ENCODE measurements at regions of chr5 and their contacts with region 1.

Region 1: DNA sequence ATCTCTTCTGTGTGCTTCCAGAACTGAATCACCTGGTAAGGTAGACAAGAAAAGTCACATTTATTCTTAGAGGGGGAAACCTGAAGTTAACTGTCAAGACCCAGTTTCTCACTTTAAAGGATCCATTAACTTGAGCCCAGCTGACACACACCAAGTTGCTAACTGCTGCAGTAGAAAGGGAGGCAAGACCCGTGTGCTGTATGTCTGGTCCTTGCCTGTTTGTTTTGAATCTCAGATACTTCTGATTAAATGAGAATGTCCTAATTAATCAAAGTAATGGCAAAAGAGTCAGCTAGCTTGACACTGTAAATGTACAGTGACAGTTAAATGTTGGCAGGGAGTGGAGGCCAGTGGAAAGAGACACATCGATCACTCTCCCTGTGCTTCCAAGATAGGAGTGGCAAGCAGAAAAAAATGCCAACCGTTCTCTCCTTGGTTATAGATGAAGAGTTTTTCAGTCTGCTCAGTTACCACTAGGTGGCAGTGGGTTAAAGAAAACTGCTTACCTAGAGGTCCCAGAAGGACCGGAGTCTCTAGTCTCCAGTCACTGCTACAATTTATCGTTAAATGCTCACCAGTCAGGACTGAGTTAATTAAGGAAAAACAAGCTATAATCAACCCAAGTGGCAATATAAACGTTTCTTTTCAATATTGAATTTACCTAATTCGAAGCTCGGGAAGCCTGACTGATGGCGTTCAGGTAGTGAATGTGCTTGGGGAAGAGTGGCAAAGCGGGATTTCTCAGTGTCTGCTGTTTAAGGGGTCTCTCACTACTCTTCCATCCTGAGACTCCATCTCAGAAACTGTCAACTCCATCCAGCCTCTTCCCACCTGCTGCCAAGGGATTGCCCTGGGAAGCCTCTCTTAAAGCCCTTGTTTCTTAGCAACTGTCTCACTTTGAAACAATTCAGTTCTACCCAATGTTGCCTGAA is 18.4 kb downstream of the LSM11 start:
- DNase-seq: peak; percentile 75
- H3K4me3 ChIP-seq: peak overlapping the region in 1 of 2 experiments; percentile 25; a peak in 1 of 4 replicates
- H3K27ac ChIP-seq: no peak overlapping the region
- H3K4me1 ChIP-seq: no peaks in the 10 kb centered on the region; a peak in 1 of 4 replicates
- H3K27me3 ChIP-seq: no peaks in the 10 kb centered on the region
- CTCF ChIP-seq: peak; percentile 80
- EP300 ChIP-seq: no peak
- RAD21 ChIP-seq: peak; percentile 84

Region 2: GRCh38 chr5:157718519-157718918 is 43.4 kb before region 1 on chr5:
- CTCF ChIA-PET with region 1: no interaction called
- POLR2A ChIA-PET with region 1: no interaction called
- DNase-seq: peak; percentile 61
- H3K4me3 ChIP-seq: no peak overlapping the region; a peak in 1 of 4 replicates
- H3K27ac ChIP-seq: peak overlapping the region in 1 of 2 experiments; percentile 51; a peak in 1 of 4 replicates
- H3K4me1 ChIP-seq: no peaks in the 10 kb centered on the region; a peak in 1 of 4 replicates
- H3K27me3 ChIP-seq: no peaks in the 10 kb centered on the region
- CTCF ChIP-seq: peak; percentile 72
- EP300 ChIP-seq: no peak
- RAD21 ChIP-seq: peak; percentile 87

Region 3: GRCh38 chr5:157743163-157744050 is 18.5 kb before region 1 on chr5 and contains the start of gene LSM11:
- CTCF ChIA-PET with region 1: interaction called, 41 read pairs
- POLR2A ChIA-PET with region 1: no interaction called
- DNase-seq: peak; percentile 98
- H3K4me3 ChIP-seq: peak within 1 kb of the TSS; percentile 76 to 83
- H3K27ac ChIP-seq: peak within 1 kb of the TSS in 1 of 2 experiments; percentile 56; a peak in 1 of 4 replicates
- H3K4me1 ChIP-seq: peaks cover 0 to 18% of the 10 kb centered on the region in 2 experiments; a peak in 2 of 4 replicates
- H3K27me3 ChIP-seq: no peaks in the 10 kb centered on the region
- CTCF ChIP-seq: peak; percentile 93
- EP300 ChIP-seq: no peak; a peak in 1 of 4 replicates
- RAD21 ChIP-seq: peak; percentile 79
- polyA plus RNA-seq, gene LSM11: 0.95 and 1.3 TPM in 2 replicates

Region 4: GRCh38 chr5:157772127-157772526 is 10.2 kb after region 1 on chr5:
- CTCF ChIA-PET with region 1: interaction called, 28 read pairs
- POLR2A ChIA-PET with region 1: no interaction called
- DNase-seq: no peak
- H3K4me3 ChIP-seq: no peak overlapping the region
- H3K27ac ChIP-seq: no peak overlapping the region
- H3K4me1 ChIP-seq: no peaks in the 10 kb centered on the region
- H3K27me3 ChIP-seq: no peaks in the 10 kb centered on the region
- CTCF ChIP-seq: no peak
- EP300 ChIP-seq: no peak
- RAD21 ChIP-seq: no peak

Region 5: GRCh38 chr5:157793301-157793700 is 31.3 kb after region 1 on chr5:
- CTCF ChIA-PET with region 1: interaction called, 11 read pairs
- POLR2A ChIA-PET with region 1: no interaction called
- DNase-seq: no peak
- H3K4me3 ChIP-seq: no peak overlapping the region
- H3K27ac ChIP-seq: no peak overlapping the region
- H3K4me1 ChIP-seq: no peaks in the 10 kb centered on the region
- H3K27me3 ChIP-seq: no peaks in the 10 kb centered on the region
- CTCF ChIP-seq: no peak
- EP300 ChIP-seq: no peak
- RAD21 ChIP-seq: no peak

Region 6: DNA sequence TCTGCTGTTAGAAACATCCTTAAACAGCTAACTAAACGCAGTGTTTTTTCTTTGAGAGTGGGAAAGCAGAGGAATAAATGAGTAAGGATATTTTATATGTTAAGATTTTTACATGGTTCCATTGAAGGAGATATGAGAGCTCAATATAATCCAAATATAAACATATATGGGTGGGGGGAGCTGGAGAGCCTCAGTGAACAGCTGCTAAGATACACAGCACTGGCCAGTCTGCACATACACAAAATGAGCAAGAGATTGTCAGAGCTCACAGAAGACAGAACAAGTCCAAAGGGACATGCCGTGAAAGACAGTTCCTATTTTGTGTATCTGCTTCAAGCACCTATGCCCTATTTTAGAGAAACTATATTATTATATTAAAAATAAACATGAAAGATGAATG is 50.1 kb after region 1 on chr5:
- CTCF ChIA-PET with region 1: interaction called, 11 read pairs
- POLR2A ChIA-PET with region 1: no interaction called
- DNase-seq: no peak
- H3K4me3 ChIP-seq: no peak overlapping the region
- H3K27ac ChIP-seq: no peak overlapping the region
- H3K4me1 ChIP-seq: no peaks in the 10 kb centered on the region; a peak in 2 of 4 replicates
- H3K27me3 ChIP-seq: no peaks in the 10 kb centered on the region
- CTCF ChIP-seq: no peak
- EP300 ChIP-seq: no peak
- RAD21 ChIP-seq: no peak

Region 7: GRCh38 chr5:157948738-157949410 is 186.9 kb after region 1 on chr5:
- CTCF ChIA-PET with region 1: interaction called, 26 read pairs
- POLR2A ChIA-PET with region 1: no interaction called
- DNase-seq: peak; percentile 77
- H3K4me3 ChIP-seq: peak overlapping the region in 1 of 2 experiments; percentile 1; a peak in 1 of 4 replicates
- H3K27ac ChIP-seq: no peak overlapping the region
- H3K4me1 ChIP-seq: no peaks in the 10 kb centered on the region; a peak in 1 of 4 replicates
- H3K27me3 ChIP-seq: no peaks in the 10 kb centered on the region
- CTCF ChIP-seq: peak; percentile 91
- EP300 ChIP-seq: no peak
- RAD21 ChIP-seq: peak; percentile 83

Region 8: DNA sequence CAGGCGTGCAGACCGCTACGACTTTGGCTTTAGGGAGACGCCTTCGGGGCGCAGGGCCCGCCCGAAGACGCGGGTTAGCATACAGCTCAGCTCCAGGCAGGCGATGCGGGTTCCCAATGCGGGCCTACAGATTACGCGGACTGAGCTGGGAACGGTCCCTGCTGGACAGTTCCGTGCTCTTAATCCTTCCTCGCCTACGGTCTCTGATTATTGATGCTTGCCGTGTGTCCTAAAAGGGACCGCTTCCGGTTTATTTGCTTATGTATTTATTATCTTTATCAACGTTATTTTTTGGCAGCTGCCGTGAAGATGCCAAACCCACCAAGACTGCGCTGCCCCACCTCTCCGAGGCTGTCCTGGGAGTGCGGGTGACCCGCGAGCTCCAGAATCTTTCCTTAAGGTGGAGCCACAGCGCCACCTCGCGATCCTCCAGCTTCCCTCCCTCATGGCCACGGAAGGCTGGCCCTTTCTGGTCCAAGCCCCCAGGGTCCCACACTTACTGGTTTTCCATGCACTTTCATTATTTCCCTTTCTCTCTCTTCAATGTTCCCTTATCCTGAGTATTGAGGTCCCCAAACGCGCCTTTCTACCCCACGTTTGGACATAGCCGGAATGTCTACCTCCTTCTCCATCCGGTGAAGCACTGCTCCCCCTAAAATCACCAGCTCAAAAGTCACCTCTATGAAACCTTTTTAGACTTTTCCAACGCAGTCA is 1344.8 kb after region 1 on chr5:
- CTCF ChIA-PET with region 1: interaction called, 19 read pairs
- POLR2A ChIA-PET with region 1: no interaction called
- DNase-seq: peak; percentile 91
- H3K4me3 ChIP-seq: peak overlapping the region; percentile 28 to 63; a peak in 2 of 4 replicates
- H3K27ac ChIP-seq: no peak overlapping the region
- H3K4me1 ChIP-seq: no peaks in the 10 kb centered on the region; a peak in 1 of 4 replicates
- H3K27me3 ChIP-seq: peaks cover 10% of the 10 kb centered on the region; the same call in 1 of the 2 replicates
- CTCF ChIP-seq: peak; percentile 97
- EP300 ChIP-seq: no peak
- RAD21 ChIP-seq: peak; percentile 96

Measured in SK-N-SH (cell line).